ENCODE measurements at regions of chr6 and their contacts with region 1.

Region 1: GRCh38 chr6:104689551-104690205 is 170.0 kb downstream of the HACE1 start:
- DNase-seq: no peak
- H3K4me3 ChIP-seq: no peak overlapping the region
- H3K27ac ChIP-seq: no peak overlapping the region
- H3K4me1 ChIP-seq: peaks cover 0 to 8% of the 10 kb centered on the region in 2 donors
- H3K27me3 ChIP-seq: no peaks in the 10 kb centered on the region
- CTCF ChIP-seq: no peak
- POLR2A ChIP-seq: no peak

Region 2: DNA sequence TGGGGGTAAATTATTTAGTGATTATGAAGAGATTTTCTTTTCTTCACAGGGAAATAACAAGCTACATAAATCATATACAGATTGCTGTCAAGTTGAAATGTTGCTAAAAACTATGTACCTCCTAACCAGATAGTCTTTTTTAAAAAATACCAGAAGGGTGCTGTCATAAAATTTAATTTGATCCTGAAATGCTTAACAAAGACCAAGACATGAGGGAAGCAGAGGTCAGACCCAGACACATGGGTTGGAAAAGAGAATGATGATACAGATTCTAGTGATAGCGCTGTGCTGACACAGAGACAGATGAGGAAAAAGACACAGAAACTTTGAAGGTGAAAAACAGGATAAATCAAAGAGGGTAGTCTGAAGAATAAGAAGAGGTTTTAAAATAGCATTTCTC is 403.0 kb before region 1 on chr6:
- intact Hi-C with region 1: no loop called
- DNase-seq: no peak
- H3K4me3 ChIP-seq: no peak overlapping the region
- H3K27ac ChIP-seq: no peak overlapping the region
- H3K4me1 ChIP-seq: no peaks in the 10 kb centered on the region
- H3K27me3 ChIP-seq: no peaks in the 10 kb centered on the region
- CTCF ChIP-seq: no peak
- POLR2A ChIP-seq: no peak

Region 3: DNA sequence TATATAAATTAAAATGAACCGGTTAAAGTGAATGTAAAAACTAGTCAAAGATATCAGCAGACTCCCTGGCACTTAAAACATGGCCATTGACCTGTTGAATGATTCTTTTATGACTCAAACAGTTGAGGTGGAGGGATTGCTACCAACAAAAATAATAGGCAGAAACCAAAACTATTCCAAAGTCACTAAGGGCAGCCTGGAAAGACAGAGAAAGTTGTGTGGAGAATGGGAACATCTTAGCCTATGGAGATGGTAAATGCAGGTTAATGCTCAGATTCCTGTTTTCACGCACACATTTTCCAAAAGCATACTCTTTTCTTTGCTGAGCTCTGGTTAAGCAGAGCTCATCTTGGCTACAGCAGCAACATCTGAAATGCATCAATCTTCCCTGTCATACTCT is 383.5 kb before region 1 on chr6:
- intact Hi-C with region 1: no loop called
- DNase-seq: no peak
- H3K4me3 ChIP-seq: no peak overlapping the region
- H3K27ac ChIP-seq: no peak overlapping the region
- H3K4me1 ChIP-seq: no peaks in the 10 kb centered on the region
- H3K27me3 ChIP-seq: no peaks in the 10 kb centered on the region
- CTCF ChIP-seq: no peak
- POLR2A ChIP-seq: no peak

Region 4: DNA sequence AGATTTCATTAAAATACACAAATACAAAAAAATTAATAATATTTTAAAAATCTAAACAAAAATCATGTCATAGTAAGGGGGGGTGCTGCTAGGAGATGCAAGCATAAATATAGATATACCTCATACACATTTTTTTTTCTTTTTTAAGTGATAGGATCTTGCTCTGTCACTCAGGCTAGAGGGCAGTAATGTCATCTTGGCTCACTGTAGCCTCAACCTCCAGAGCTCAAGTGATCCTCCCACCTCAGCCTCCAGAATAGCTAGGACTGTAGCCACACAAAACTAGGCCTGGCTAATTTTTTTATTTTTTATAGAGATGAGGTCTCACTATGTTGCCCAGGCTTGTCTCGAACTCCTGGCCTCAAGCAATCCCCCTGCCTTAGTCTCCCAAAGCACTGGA is 79.2 kb after region 1 on chr6:
- intact Hi-C with region 1: loop called (anchors 5 kb)
- DNase-seq: no peak
- H3K4me3 ChIP-seq: no peak overlapping the region
- H3K27ac ChIP-seq: no peak overlapping the region
- H3K4me1 ChIP-seq: no peaks in the 10 kb centered on the region
- H3K27me3 ChIP-seq: no peaks in the 10 kb centered on the region
- CTCF ChIP-seq: no peak
- POLR2A ChIP-seq: no peak

Region 5: DNA sequence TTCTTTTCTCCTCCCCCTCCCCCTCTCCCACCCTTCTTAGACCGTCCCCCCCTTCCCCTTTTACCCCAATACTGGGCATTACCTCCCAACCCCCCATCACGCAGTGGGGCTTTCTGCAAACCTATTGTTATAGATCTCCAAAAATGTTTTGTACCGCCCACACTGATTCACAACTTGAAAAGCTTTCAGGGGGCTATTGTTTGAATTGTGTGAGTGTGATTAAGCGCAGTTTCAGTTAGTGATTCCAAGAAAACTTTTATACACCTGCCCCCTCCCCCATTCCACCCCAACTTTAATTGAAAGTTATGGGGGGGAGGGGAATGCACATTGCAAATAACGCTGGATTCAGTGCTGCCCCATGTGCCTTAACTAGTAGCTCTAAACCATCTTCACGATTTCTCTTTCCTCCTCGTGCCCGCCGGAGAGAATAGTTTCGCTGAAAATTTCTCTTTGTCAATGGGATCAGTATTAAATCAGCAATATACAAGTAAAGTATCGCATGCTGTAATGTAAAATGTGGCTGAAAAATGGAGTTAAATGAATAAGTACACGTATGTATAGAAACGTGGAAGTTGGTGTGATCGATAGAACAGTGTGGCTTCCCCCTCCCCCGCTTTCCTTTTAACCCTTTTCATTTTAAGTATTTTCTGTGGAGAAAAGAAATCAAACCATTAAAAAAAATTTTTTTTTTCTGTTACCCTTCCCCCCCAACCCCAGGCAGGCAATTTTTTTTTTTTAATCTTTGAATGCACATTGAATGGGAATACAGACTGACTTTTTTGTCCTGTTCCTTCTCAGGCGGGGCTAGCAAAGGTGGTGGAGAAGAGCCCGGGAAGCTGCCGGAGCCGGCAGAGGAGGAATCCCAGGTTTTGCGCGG is 267.9 kb after region 1 on chr6:
- intact Hi-C with region 1: no loop called
- DNase-seq: no peak
- H3K4me3 ChIP-seq: no peak overlapping the region
- H3K27ac ChIP-seq: no peak overlapping the region
- H3K4me1 ChIP-seq: peaks cover 7 to 8% of the 10 kb centered on the region in 2 donors
- H3K27me3 ChIP-seq: peaks cover 35% of the 10 kb centered on the region
- CTCF ChIP-seq: no peak
- POLR2A ChIP-seq: no peak

Region 6: GRCh38 chr6:105136431-105137350 is 447.0 kb after region 1 on chr6:
- intact Hi-C with region 1: no loop called
- DNase-seq: peak; percentile 40 to 43
- H3K4me3 ChIP-seq: peak overlapping the region; percentile 68 to 86 (median 86)
- H3K27ac ChIP-seq: peak overlapping the region in 2 of 3 donors; percentile 13 to 58
- H3K4me1 ChIP-seq: no peaks in the 10 kb centered on the region
- H3K27me3 ChIP-seq: no peaks in the 10 kb centered on the region
- CTCF ChIP-seq: peak in 3 of 6 experiments; percentile 15 to 21 (median 21)
- POLR2A ChIP-seq: peak in 1 of 2 donors; percentile 23